Activated T-helper 1 cell treated with anti-CD3 and anti-CD28 coated beads, Interleukin-12 subunit alpha, Interleukin-12 subunit beta, Interleukin-2, Interleukin-4 antibody, amounts not matched to agents 30 ng/mL and 10 ng/mL and 1 ng/mL, durations not matched to agents 14 hours and 24 hours and 36 hours (primary cell): ENCODE measurements at regions of chr18 and their contacts with region 1.

Region 1: GRCh38 chr18:31892936-31893335 is 50.0 kb downstream of the TRAPPC8 start:
- DNase-seq: no peak
- H3K4me3 Mint-ChIP-seq: no peak overlapping the region
- H3K27ac Mint-ChIP-seq: no peak overlapping the region
- H3K4me1 Mint-ChIP-seq: no peaks in the 10 kb centered on the region
- H3K27me3 Mint-ChIP-seq: no peaks in the 10 kb centered on the region

Region 2: DNA sequence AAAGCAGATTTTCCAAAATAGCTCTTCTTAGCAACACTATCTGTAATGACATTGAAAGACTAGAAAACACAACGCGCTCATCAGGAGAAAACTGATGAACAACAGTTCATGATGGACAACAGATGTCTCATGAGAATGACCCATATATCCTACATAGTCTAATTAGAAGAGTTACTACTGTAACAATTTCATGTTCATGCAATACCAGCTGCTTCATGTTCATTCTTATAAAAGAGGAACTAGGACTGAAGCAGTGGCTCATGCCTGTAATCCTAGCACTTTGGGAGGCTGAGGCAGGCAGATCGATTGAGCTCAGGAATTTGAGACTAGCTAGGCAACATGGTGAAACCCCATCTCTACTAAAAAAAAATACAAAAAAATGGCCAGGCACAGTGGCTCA is 27.3 kb after region 1 on chr18:
- intact Hi-C with region 1: loop called (anchors 1 kb)
- DNase-seq: no peak
- H3K4me3 Mint-ChIP-seq: no peak overlapping the region
- H3K27ac Mint-ChIP-seq: no peak overlapping the region
- H3K4me1 Mint-ChIP-seq: no peaks in the 10 kb centered on the region
- H3K27me3 Mint-ChIP-seq: no peaks in the 10 kb centered on the region